A549 (cell line): ENCODE measurements at regions of chr2 and their contacts with region 1.

Region 1: GRCh38 chr2:168920504-168921157 is 19.5 kb downstream of the G6PC2 start:
- DNase-seq: peak; percentile 6 to 41
- ATAC-seq: peak in 1 of 2 experiments; percentile 67; a peak in 3 of 6 replicates
- H3K4me3 ChIP-seq: no peak overlapping the region
- H3K27ac ChIP-seq: no peak overlapping the region
- H3K4me1 ChIP-seq: no peaks in the 10 kb centered on the region
- CTCF ChIP-seq: peak; percentile 70
- EP300 ChIP-seq: no peak
- POLR2A ChIP-seq: no peak
- RAD21 ChIP-seq: peak; percentile 79 to 82

Region 2: DNA sequence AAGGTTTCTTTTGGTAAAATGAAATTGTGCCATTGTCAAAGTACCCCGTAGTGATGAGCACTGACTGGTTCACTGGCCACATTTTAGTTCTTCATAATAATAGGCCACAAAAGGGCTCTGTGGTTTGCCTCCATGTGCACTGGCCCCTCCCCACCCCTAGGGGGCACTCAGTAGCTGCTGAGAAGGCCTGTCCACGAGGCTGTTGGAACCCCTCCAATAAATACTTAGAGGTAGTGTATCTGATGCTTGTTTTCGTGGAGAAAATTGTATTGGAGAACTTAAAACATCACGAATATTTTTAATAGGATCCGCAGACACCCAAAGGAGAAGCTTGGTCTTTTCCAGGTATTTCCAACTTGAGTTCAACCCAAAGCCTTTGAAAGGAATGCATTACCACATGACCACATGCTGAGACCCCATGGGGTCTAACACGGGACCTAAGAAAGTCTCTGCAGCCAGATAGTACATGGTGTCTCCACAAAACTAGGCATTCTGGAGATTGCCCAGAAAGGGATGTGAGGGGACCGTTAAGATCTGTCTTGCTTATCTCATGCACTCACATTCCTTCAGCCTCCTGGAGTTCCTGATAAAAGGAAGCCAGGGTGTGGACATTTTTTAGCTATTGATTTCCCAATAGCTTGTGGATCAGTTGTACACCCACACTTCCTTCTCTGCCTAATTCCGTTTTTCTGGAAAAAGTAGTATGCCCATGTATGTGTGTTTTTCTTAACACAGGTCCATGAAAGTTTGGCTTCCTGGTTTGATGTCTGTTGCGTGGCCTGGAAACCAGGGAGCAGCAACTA is 146.7 kb before region 1 on chr2:
- CTCF ChIA-PET with region 1: interaction called, 19 read pairs
- POLR2A ChIA-PET with region 1: no interaction called
- DNase-seq: peak; percentile 13 to 64
- ATAC-seq: peak; percentile 77 to 88; a peak in 5 of 6 replicates
- H3K4me3 ChIP-seq: no peak overlapping the region
- H3K27ac ChIP-seq: no peak overlapping the region
- H3K4me1 ChIP-seq: no peaks in the 10 kb centered on the region
- CTCF ChIP-seq: peak; percentile 65
- EP300 ChIP-seq: no peak
- POLR2A ChIP-seq: no peak
- RAD21 ChIP-seq: peak; percentile 79 to 80